WTC11 (cell line): ENCODE measurements at regions of chr9 and their contacts with region 1.

Region 1: GRCh38 chr9:84174486-84174885 is 166.1 kb downstream of the SLC28A3 start:
- DNase-seq: no peak
- ATAC-seq: no peak
- H3K4me3 Mint-ChIP-seq: no peak overlapping the region
- H3K27ac Mint-ChIP-seq: no peak overlapping the region
- H3K4me1 Mint-ChIP-seq: peaks cover 5% of the 10 kb centered on the region
- H3K27me3 Mint-ChIP-seq: no peaks in the 10 kb centered on the region
- CTCF ChIP-seq: no peak

Region 2: GRCh38 chr9:83384214-83384613 is 790.3 kb before region 1 on chr9:
- CTCF ChIA-PET with region 1: no interaction called
- POLR2A ChIA-PET with region 1: no interaction called
- DNase-seq: no peak
- ATAC-seq: no peak
- H3K4me3 Mint-ChIP-seq: no peak overlapping the region
- H3K27ac Mint-ChIP-seq: no peak overlapping the region
- H3K4me1 Mint-ChIP-seq: no peaks in the 10 kb centered on the region
- H3K27me3 Mint-ChIP-seq: no peaks in the 10 kb centered on the region
- CTCF ChIP-seq: no peak

Region 3: DNA sequence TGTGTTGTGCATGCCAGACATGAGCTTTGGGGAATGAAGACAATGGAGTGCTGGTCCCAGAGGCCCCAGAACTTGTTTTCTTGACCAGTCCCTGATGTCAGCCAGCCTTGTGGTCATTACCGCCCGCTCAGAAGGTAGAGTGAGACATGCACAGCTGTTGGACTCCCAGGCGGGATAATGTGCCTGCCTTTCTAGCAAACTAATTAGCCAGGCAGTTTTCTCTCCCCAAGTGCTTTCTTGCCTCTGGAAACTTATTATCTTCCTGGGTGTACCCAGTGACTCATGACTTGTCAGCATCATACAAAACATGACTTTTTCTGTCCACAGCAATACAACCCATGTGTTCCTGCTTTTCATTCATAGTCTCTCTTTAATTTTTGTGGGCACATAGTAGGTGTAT is 62.8 kb before region 1 on chr9:
- CTCF ChIA-PET with region 1: no interaction called
- POLR2A ChIA-PET with region 1: no interaction called
- DNase-seq: no peak
- ATAC-seq: no peak
- H3K4me3 Mint-ChIP-seq: no peak overlapping the region
- H3K27ac Mint-ChIP-seq: no peak overlapping the region
- H3K4me1 Mint-ChIP-seq: no peaks in the 10 kb centered on the region
- H3K27me3 Mint-ChIP-seq: peaks cover 13% of the 10 kb centered on the region
- CTCF ChIP-seq: no peak

Region 4: DNA sequence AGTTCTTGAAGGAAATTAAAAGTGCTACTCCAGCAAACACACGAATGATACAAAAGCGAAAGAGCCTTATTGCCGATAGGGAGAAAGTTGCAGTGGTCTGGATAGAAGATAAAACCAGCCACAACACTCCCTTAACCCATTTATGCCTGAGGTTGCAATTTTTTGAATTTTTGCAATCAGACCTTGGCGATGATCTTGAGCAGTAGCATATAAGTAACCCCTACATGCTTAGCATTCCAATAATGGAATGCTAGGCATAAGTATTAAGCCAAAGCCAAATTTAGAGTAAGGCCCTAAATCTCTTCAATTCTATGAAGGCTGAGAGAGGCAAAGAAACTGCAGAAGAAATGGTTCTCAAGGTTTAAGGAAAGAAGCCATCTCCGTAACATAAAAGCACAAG is 12.6 kb after region 1 on chr9:
- CTCF ChIA-PET with region 1: interaction called, 12 read pairs
- POLR2A ChIA-PET with region 1: no interaction called
- DNase-seq: no peak
- ATAC-seq: no peak
- H3K4me3 Mint-ChIP-seq: no peak overlapping the region
- H3K27ac Mint-ChIP-seq: no peak overlapping the region
- H3K4me1 Mint-ChIP-seq: peaks cover 9% of the 10 kb centered on the region
- H3K27me3 Mint-ChIP-seq: no peaks in the 10 kb centered on the region
- CTCF ChIP-seq: no peak

Region 5: GRCh38 chr9:84254972-84255371 is 80.5 kb after region 1 on chr9:
- CTCF ChIA-PET with region 1: no interaction called
- POLR2A ChIA-PET with region 1: no interaction called
- DNase-seq: no peak
- ATAC-seq: no peak
- H3K4me3 Mint-ChIP-seq: no peak overlapping the region
- H3K27ac Mint-ChIP-seq: no peak overlapping the region
- H3K4me1 Mint-ChIP-seq: peaks cover 13% of the 10 kb centered on the region
- H3K27me3 Mint-ChIP-seq: peaks cover 4% of the 10 kb centered on the region
- CTCF ChIP-seq: no peak